Psoas muscle (tissue), 8 donors: ENCODE measurements at regions of chr2 and their contacts with region 1.

Region 1: DNA sequence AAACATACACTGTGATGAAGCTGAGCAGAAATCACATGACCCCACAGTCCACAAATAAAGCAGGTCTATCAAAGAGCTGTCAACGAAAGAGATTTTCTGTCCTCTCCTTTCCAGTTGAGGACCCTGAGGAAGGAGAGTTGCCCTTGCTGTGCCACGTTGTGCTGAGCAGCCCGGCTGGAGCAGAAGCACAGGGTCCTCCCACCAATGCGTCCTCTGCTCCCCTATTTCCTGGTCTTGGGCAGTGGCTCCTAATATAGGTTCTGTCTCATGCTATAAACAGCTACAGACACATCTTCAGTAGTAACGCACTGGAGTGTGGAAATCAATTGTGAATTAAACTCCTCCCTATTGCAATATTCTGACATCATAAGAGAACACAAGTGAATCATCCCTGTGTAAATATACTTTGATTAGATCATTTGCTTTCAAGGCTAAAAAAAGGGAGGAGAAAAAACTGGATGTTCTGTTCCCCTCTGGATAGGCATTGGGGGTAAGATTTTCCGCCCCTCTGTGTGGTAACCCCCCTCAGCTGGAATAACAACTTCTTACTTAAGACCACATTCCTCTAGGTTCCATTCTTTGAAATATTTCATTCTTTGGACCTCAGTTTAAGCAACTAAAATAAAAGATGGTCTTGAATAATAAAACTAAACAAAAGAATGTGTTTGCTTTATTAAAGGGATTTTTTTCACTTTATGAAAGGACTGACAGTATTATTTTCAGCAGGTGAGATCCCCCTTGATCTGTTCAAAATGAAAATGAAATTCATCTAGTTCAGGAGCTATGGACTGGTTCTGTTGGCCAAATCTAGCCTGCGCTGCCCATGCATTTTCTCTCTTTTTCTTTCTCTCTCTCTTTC is 8.3 kb upstream of the RHOB start:
- DNase-seq: no peak
- ATAC-seq: peak; percentile 88 to 92 (median 89)
- H3K4me3 ChIP-seq: no peak overlapping the region
- H3K27ac ChIP-seq: peak overlapping the region; percentile 6
- H3K4me1 ChIP-seq: peaks cover 11% of the 10 kb centered on the region
- H3K27me3 ChIP-seq: no peaks in the 10 kb centered on the region
- CTCF ChIP-seq: no peak

Region 2: DNA sequence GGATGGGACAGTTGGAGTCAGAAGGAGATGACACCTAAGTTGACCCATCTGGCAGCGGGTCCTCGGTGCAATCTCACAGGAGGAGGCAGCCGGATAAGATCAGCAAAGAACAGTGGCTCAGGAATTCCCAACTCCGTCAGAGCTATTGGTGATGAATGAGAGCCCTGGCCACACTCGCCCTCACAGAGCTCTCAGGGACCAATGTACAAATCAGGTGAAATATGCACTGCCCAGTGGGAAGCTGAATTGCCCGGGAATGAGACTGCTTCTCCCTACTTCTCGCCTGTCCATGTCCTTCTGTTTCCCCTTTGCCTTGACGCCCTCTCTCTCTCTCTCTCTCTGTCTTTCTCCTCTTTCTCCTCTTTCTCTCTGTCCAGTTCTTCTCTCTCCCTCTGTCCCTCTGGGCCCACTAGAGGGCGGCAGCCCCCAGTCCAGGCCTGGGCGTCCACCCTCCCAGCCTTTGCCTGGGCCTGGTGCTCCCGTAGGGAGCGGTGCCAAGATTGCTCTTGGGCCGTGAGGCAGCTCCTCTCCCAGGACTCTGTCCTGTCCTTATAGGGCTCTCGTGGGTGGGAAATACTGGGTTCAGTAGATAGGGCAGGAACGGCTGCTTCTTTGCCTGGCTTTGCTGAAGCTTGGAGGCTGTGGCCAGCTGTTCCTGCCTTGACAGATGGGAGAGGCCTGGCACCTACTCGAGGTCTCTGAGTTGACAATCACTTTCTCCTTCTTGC is 59.6 kb before region 1 on chr2:
- intact Hi-C with region 1: loop called in 1 of 2 experiments (anchors 5 kb)
- DNase-seq: peak; percentile 86 to 92
- ATAC-seq: peak; percentile 98 to 99 (median 98)
- H3K4me3 ChIP-seq: no peak overlapping the region
- H3K27ac ChIP-seq: no peak overlapping the region
- H3K4me1 ChIP-seq: peaks cover 5% of the 10 kb centered on the region
- H3K27me3 ChIP-seq: no peaks in the 10 kb centered on the region
- CTCF ChIP-seq: peak; percentile 72

Region 3: GRCh38 chr2:20635675-20636584 is 197.4 kb after region 1 on chr2:
- intact Hi-C with region 1: loop called (anchors 1 to 2 kb)
- DNase-seq: peak; percentile 87 to 92
- ATAC-seq: peak; percentile 89 to 98 (median 93)
- H3K4me3 ChIP-seq: no peak overlapping the region
- H3K27ac ChIP-seq: no peak overlapping the region
- H3K4me1 ChIP-seq: peaks cover 20% of the 10 kb centered on the region
- H3K27me3 ChIP-seq: no peaks in the 10 kb centered on the region
- CTCF ChIP-seq: peak; percentile 98

Region 4: DNA sequence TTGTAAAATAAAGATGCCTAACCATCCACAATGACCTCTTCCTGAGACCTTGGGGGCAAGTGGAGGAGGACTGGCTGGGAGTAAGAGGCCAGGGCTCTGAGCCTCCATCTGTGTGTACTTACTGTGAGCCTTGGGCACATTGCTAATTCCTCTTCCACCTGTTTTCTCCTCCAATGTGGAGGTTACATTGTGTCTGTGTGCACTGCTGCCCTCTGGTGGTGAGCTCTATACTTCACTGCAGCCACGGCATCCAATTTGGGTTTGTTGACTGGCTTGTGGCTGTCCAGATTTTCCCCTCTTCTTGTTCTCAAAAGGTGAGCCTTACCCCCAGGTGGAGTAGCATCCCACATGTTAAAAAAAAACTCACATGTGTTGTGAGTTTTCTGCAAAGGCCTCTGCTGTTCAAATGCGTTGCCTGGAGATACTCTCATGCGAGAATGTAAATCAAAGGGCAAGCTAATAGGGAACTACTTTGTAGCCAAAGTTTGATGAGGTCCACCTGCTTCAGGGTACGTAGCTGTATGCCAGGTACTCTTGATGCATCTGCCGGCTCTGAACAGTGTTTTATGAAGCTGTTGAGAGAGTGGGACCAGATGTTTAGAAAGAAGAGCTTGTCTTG is 524.5 kb after region 1 on chr2:
- intact Hi-C with region 1: loop called in 1 of 2 experiments (anchors 10 kb)
- DNase-seq: peak; percentile 66 to 76
- ATAC-seq: peak; percentile 82 to 92 (median 90)
- H3K4me3 ChIP-seq: no peak overlapping the region
- H3K27ac ChIP-seq: no peak overlapping the region
- H3K4me1 ChIP-seq: peaks cover 10% of the 10 kb centered on the region
- H3K27me3 ChIP-seq: peaks cover 0 to 2% (median 0%) of the 10 kb centered on the region in 3 donors
- CTCF ChIP-seq: peak; percentile 87